Activated CD4-positive, alpha-beta memory T cell treated with anti-CD3 and anti-CD28 coated beads for 36 hours (primary cell): ENCODE measurements at regions of chrX and their contacts with region 1.

Region 1: GRCh38 chrX:102155806-102156179 is at the start of gene BEX5:
- DNase-seq: peak; percentile 77
- H3K4me3 Mint-ChIP-seq: peak within 1 kb of the TSS; percentile 98
- H3K27ac Mint-ChIP-seq: peak within 1 kb of the TSS; percentile 91
- H3K4me1 Mint-ChIP-seq: peaks cover 10% of the 10 kb centered on the region
- H3K27me3 Mint-ChIP-seq: peaks cover 7% of the 10 kb centered on the region
- total RNA-seq, gene BEX5: 7.0 to 8.4 TPM

Region 2: DNA sequence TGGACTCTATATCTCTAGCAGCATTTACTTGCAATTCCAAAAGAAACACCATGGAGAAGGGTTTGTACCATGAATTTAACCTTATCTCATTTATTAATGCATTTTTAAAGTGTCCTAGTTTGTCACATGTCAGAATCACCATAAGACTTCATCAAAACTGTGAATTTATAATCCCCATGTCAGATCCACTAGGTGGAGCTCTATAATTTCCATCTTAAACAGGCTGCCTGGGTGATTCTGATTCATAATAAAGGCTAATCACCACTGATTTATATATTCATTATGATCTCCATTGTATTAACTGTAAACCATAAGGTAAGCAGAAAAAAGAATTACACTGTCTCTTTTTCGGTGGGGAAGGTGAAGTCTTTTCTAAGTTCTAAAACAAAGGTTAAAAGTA is 26.3 kb before region 1 on chrX:
- CTCF ChIA-PET with region 1: no interaction called
- POLR2A ChIA-PET with region 1: no interaction called
- intact Hi-C with region 1: loop called (anchors 1 kb)
- DNase-seq: no peak
- H3K4me3 Mint-ChIP-seq: no peak overlapping the region
- H3K27ac Mint-ChIP-seq: no peak overlapping the region
- H3K4me1 Mint-ChIP-seq: peaks cover 4% of the 10 kb centered on the region
- H3K27me3 Mint-ChIP-seq: peaks cover 23% of the 10 kb centered on the region

Region 3: DNA sequence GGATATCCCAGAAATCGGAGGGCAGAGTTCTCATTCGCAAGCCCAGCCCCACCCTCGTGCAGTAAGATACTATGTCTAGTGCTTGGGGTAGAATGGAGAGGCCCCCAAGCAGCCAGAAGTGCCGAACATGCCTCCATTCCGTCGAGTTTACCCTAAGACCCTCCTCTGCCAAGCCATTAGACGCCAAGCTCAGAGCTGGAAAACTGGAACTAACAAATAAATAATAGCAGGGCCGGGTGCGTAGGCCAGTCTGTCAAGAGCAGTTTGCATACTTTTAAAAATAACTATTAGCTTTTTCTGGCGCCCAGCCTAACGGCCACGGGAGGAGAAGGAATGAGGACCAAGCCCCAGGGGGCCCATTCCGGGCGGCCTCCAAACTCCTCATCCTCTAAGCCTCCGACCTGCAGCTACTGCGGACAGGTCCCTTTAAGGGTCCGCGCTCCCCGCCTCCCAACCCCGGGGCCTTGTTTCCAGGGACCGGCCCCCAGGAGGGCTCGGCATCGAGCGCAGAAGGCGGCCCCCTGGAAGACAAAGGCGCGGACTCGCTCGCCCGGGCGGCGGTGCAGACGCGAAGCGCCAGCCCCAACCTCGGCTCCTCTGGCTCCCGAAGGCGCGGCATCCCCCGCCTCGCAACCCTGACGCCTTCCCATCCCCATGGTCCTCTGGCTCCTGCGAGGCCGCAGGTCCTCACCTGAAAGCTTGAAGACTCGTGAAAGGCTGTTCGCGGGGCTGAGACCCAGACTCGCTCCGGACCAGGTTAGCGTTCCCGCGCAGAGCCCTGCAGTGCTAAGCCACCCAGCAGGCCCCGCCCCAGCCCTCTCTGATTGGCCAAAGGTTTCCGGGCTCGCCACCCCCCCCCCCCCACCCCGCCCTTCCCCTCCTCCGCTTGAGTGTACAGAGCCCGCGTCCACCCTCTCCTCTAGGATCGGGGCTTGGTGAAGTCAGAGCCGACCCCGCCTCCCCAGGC is 360.5 kb after region 1 on chrX and contains the start of gene TMSB15A:
- CTCF ChIA-PET with region 1: no interaction called
- POLR2A ChIA-PET with region 1: no interaction called
- intact Hi-C with region 1: loop called (anchors 2 kb)
- DNase-seq: peak; percentile 66
- H3K4me3 Mint-ChIP-seq: peak within 1 kb of the TSS; percentile 73
- H3K27ac Mint-ChIP-seq: no peak within 1 kb of the TSS
- H3K4me1 Mint-ChIP-seq: peaks cover 8% of the 10 kb centered on the region
- H3K27me3 Mint-ChIP-seq: peaks cover 25% of the 10 kb centered on the region
- total RNA-seq, gene TMSB15A: 0.45 to 0.70 TPM

Region 4: DNA sequence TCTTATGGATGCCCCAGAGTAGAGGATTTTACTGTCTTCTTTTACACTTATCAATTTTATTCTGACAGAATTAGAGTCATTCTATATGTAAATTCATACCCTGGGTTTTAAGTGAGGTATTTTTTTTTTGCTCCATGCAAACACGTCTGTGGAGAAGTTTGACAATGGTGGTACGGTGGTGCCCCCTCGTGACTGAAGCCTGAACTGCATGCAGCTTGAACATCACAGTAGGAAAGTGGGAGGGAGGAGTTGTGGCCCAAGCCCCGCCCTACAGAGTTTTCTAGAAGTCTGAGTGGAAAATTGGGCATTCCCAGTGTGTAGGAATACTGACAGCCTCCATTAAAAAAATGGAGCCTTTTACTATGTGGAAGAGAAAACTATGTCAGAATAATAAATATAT is 707.9 kb after region 1 on chrX:
- CTCF ChIA-PET with region 1: no interaction called
- POLR2A ChIA-PET with region 1: no interaction called
- intact Hi-C with region 1: loop called (anchors 2 kb)
- DNase-seq: peak; percentile 87
- H3K4me3 Mint-ChIP-seq: no peak overlapping the region
- H3K27ac Mint-ChIP-seq: no peak overlapping the region
- H3K4me1 Mint-ChIP-seq: no peaks in the 10 kb centered on the region
- H3K27me3 Mint-ChIP-seq: no peaks in the 10 kb centered on the region